Heart left ventricle (tissue), 16 donors: ENCODE measurements at regions of chr10 and their contacts with region 1.

Region 1: GRCh38 chr10:69014171-69014570 is 25.6 kb downstream of the KIFBP start:
- DNase-seq: no peak
- ATAC-seq: no peak
- H3K4me3 ChIP-seq: no peak overlapping the region
- H3K27ac ChIP-seq: no peak overlapping the region
- H3K4me1 ChIP-seq: peaks cover 0 to 3% (median 0%) of the 10 kb centered on the region in 12 donors
- H3K27me3 ChIP-seq: no peaks in the 10 kb centered on the region
- CTCF ChIP-seq: no peak
- POLR2A ChIP-seq: no peak

Region 2: DNA sequence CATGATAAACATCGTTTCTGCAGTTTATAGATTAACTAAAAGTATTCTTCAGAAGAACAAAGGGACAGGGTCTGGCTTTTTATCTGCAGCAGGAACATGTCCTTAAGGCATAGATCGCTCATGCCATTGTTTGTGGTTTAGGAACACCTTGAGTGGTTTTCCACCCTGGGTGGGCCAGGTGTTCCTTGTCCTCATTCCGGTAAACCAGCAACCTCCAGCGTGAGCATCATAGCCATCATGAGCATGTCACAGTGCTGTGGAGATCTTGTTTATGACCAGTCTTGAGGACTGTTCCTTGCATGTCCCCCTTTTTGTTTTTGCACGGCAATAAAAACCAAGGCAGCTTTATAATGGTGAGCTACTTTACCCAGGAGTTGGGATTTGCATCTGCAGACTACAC is 152.9 kb before region 1 on chr10:
- intact Hi-C with region 1: no loop called
- DNase-seq: no peak
- ATAC-seq: no peak
- H3K4me3 ChIP-seq: no peak overlapping the region
- H3K27ac ChIP-seq: no peak overlapping the region
- H3K4me1 ChIP-seq: no peaks in the 10 kb centered on the region
- H3K27me3 ChIP-seq: no peaks in the 10 kb centered on the region
- CTCF ChIP-seq: no peak
- POLR2A ChIP-seq: no peak

Region 3: GRCh38 chr10:69045441-69046300 is 31.5 kb after region 1 on chr10:
- intact Hi-C with region 1: loop called in 5 of 10 experiments (anchors 5 kb)
- DNase-seq: no peak
- ATAC-seq: peak in 3 of 4 donors; percentile 10 to 49 (median 35)
- H3K4me3 ChIP-seq: no peak overlapping the region
- H3K27ac ChIP-seq: peak overlapping the region in 4 of 12 donors; percentile 7 to 98 (median 31)
- H3K4me1 ChIP-seq: peaks cover 0 to 68% (median 0%) of the 10 kb centered on the region in 12 donors
- H3K27me3 ChIP-seq: no peaks in the 10 kb centered on the region
- CTCF ChIP-seq: no peak
- POLR2A ChIP-seq: no peak

Region 4: GRCh38 chr10:69051303-69051702 is 37.1 kb after region 1 on chr10:
- intact Hi-C with region 1: loop called in 5 of 10 experiments (anchors 5 kb)
- DNase-seq: peak in 4 of 5 donors; percentile 45 to 63 (median 52)
- ATAC-seq: peak; percentile 17 to 64 (median 34)
- H3K4me3 ChIP-seq: no peak overlapping the region
- H3K27ac ChIP-seq: peak overlapping the region in 10 of 12 donors; percentile 4 to 98 (median 74)
- H3K4me1 ChIP-seq: peaks cover 0 to 93% (median 8%) of the 10 kb centered on the region in 12 donors
- H3K27me3 ChIP-seq: no peaks in the 10 kb centered on the region
- CTCF ChIP-seq: no peak
- POLR2A ChIP-seq: no peak